A549 (cell line): ENCODE measurements at regions of chr10 and their contacts with region 1.

Region 1: DNA sequence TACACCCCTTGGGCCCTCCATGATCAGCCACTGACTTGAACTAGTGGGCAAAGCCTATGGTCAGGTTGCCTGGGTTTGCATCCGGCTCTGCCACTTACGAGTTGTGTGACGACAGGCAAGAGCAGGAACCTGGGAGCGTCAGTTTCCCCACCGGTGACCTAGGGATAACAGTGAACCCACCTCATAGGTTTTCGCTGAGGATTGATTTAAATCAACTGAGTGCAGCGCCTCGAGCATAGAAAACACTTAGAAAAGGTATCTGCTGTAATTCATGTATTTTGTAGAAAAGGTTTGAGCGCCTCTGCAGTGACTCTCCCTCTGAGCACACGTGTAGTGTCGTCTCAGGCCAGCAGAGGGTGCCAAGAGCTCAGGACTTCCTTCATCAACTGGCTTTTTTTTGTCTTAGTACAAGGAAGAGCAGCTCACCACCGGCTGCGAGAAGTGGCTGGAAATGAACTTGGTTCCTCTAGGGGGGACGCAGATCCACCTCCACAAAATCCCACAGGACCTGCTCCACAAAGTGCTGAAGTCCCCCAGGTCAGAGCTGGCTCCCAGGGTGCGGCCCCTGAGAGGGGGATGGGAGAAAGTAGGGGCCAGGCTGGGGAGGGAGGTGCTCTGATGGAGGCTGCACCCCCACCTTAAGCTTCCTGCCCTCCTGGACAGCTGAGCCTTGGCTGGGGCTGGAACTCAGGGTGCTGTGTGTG is 27.7 kb downstream of the BTBD16 start:
- DNase-seq: peak; percentile 80 to 89
- ATAC-seq: peak; percentile 82 to 93
- H3K4me3 ChIP-seq: peak overlapping the region; percentile 32; the same call in 2 of the 3 replicates
- H3K27ac ChIP-seq: peak overlapping the region; percentile 88 to 92
- H3K4me1 ChIP-seq: peaks cover 23% of the 10 kb centered on the region
- CTCF ChIP-seq: peak; percentile 96
- EP300 ChIP-seq: no peak
- POLR2A ChIP-seq: no peak
- RAD21 ChIP-seq: peak; percentile 99

Region 2: DNA sequence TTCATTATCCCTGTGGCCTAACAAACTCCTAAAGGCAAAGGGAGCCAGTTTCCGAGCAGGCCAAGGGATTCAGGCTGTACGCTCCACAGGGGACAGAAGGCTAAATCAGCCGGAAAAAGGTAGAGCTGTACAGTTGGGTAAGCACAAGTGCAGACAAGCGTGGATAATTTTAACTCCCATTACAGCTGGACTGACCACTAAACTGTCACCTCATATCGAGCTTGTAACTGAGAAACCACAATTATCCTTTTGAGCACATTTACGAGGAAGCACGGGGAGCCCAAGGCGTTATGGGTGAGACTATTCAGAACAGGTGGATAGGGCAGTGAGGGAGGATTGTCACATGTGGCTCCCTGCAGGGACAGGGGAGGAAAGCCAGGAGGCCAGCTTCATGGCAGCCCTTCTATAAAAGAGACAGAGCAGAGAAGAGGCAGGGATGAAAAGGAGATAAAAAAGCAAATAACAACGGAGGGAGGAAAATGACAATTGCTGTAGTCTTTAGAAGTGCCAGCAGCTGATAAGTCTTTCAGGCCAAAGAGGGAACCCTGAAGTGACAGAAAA is 988.5 kb before region 1 on chr10:
- CTCF ChIA-PET with region 1: no interaction called
- POLR2A ChIA-PET with region 1: no interaction called
- DNase-seq: no peak
- ATAC-seq: no peak
- H3K4me3 ChIP-seq: no peak overlapping the region
- H3K27ac ChIP-seq: no peak overlapping the region
- H3K4me1 ChIP-seq: no peaks in the 10 kb centered on the region
- CTCF ChIP-seq: no peak
- EP300 ChIP-seq: no peak
- POLR2A ChIP-seq: no peak
- RAD21 ChIP-seq: no peak

Region 3: GRCh38 chr10:122089311-122090017 is 209.3 kb before region 1 on chr10:
- CTCF ChIA-PET with region 1: no interaction called
- POLR2A ChIA-PET with region 1: no interaction called
- DNase-seq: peak in 1 of 2 experiments; percentile 34
- ATAC-seq: peak in 1 of 2 experiments; percentile 68; a peak in 3 of 6 replicates
- H3K4me3 ChIP-seq: no peak overlapping the region
- H3K27ac ChIP-seq: peak overlapping the region in 1 of 2 experiments; percentile 62; a peak in 3 of 6 replicates
- H3K4me1 ChIP-seq: 0 out of 3 replicates have a peak, but pooled peaks cover 3% of the 10 kb centered on the region
- CTCF ChIP-seq: no peak
- EP300 ChIP-seq: no peak
- POLR2A ChIP-seq: no peak
- RAD21 ChIP-seq: peak in 1 of 2 experiments; percentile 33; a peak in 2 of 5 replicates

Region 4: DNA sequence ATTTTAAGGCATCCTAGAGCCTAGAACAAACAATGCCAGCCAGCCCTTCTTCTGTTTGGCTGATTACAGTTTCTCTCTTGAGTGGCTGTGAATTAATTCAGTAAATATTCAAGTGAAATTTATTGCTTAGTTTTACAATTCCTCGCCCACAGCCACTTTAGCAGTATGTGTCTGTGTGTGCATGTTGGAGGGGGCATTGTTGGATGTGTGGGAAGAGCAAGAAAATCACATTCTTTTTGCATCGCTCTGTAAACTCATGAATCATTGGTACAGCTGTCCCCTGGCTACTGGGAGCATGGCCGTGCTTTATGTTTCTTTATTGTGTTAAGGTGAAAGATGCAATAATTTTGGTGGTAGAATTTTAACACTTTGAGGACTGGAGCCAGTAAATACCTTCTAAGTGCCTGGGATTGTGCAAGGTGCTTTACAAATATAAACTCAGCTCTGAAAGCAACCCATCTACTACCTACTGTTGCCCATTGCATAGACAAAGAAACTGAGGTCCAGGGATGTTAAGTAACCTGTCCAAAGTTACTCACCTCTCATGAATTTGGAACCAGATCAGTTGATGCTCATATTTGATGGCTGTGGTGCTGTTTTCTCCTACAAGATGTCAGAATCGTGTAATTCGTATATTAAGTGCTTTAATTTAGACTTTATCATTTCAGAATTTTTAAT is 117.6 kb before region 1 on chr10:
- CTCF ChIA-PET with region 1: no interaction called
- POLR2A ChIA-PET with region 1: no interaction called
- DNase-seq: peak in 1 of 2 experiments; percentile 42
- ATAC-seq: peak in 1 of 2 experiments; percentile 19; a peak in 2 of 6 replicates
- H3K4me3 ChIP-seq: no peak overlapping the region
- H3K27ac ChIP-seq: peak overlapping the region; percentile 59 to 82; a peak in 5 of 6 replicates
- H3K4me1 ChIP-seq: peaks cover 62% of the 10 kb centered on the region
- CTCF ChIP-seq: no peak
- EP300 ChIP-seq: no peak
- POLR2A ChIP-seq: no peak
- RAD21 ChIP-seq: no peak

Region 5: GRCh38 chr10:122257041-122257440 is 41.7 kb before region 1 on chr10:
- CTCF ChIA-PET with region 1: no interaction called
- POLR2A ChIA-PET with region 1: no interaction called
- DNase-seq: no peak
- ATAC-seq: no peak
- H3K4me3 ChIP-seq: no peak overlapping the region
- H3K27ac ChIP-seq: no peak overlapping the region
- H3K4me1 ChIP-seq: no peaks in the 10 kb centered on the region
- CTCF ChIP-seq: no peak
- EP300 ChIP-seq: no peak
- POLR2A ChIP-seq: no peak
- RAD21 ChIP-seq: no peak

Region 6: DNA sequence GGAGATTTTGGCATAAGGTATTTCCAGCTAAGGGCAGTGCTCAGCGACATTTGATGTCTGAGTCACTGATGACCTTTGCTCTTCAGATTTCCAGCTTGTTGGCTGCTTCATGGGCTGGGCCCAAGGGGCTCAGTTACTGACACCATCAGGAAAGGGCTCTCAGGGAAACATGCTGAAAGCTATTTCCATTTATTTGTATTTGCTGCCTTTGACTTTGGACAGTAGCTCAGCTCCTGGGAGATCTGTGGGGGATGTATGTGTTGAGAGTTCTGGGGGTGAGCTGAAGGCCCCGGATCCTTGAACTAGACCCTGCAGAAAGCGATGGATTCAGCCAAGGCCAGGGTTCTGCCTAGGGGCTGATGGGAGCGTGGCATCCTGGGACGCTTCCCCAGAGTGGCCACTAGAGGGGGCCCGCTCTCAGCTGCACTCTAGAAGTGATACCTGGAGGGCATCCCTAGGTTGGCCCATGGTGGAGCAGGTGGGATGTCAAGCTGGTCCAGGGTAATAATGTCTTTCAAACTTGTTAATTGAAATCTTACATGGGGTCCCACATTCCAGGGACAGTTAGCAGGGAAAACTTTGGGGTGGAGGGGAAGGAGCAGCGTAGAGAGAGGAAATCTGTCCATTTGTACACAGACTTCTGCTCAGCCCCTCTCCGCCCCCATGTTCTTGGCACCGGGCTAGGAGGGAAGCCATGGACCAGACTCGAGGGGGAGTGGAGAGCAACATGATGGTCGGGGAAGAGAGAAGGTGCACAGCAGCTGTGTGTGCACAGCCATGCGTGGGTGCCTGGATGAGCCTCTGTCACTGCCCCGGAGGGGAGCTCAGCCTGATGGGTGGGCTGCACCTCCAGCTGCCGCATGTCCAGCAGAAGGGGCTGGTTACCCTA is 30.7 kb before region 1 on chr10:
- CTCF ChIA-PET with region 1: interaction called, 10 read pairs
- POLR2A ChIA-PET with region 1: no interaction called
- DNase-seq: peak; percentile 61 to 76
- ATAC-seq: peak; percentile 82 to 93
- H3K4me3 ChIP-seq: no peak overlapping the region
- H3K27ac ChIP-seq: peak overlapping the region; percentile 65 to 67; a peak in 5 of 6 replicates
- H3K4me1 ChIP-seq: peaks cover 40% of the 10 kb centered on the region
- CTCF ChIP-seq: peak; percentile 78
- EP300 ChIP-seq: no peak
- POLR2A ChIP-seq: no peak
- RAD21 ChIP-seq: peak; percentile 53 to 64

Region 7: DNA sequence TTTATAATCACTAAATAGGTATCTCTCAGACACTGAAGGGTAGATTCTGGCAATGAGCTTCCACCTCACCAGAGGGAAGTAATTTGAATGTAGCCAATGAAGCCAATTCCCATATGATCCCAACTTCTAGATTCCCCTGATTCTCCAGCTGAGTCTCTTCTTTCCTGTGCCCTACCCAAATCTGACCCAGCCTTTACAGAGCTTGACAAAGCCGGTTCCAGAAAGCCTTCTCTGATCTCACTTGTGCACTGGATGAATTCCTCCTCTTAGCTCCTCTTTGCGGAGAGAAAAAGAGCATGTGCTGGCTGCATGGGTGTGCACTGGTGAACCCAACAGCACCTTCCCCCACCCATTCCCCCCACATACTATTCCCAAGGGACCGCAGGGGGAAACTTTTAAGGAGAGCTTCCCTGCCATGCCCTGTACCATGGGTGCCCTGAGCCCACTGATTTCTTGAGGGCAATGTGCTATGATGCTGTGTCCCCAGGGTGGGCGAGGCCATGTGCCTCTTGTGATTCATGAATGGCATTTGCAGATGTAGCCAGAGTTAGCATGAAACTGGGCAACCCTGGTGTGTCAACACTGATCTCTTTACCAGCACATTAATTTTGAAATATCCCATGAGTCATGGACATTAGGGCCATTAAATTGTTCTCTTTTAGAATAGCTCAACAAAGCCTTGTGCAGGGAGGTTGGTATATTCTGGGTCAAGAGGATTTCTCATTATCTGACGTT is 25.4 kb after region 1 on chr10:
- CTCF ChIA-PET with region 1: interaction called, 22 read pairs
- POLR2A ChIA-PET with region 1: no interaction called
- DNase-seq: peak in 1 of 2 experiments; percentile 54
- ATAC-seq: peak; percentile 82 to 84; a peak in 5 of 6 replicates
- H3K4me3 ChIP-seq: no peak overlapping the region
- H3K27ac ChIP-seq: peak overlapping the region; percentile 52 to 54; a peak in 5 of 6 replicates
- H3K4me1 ChIP-seq: peaks cover 15% of the 10 kb centered on the region
- CTCF ChIP-seq: no peak
- EP300 ChIP-seq: no peak
- POLR2A ChIP-seq: no peak
- RAD21 ChIP-seq: no peak

Region 8: GRCh38 chr10:122342293-122343134 is 43.8 kb after region 1 on chr10:
- CTCF ChIA-PET with region 1: interaction called, 17 read pairs
- POLR2A ChIA-PET with region 1: no interaction called
- DNase-seq: peak; percentile 44 to 71
- ATAC-seq: peak; percentile 81 to 83
- H3K4me3 ChIP-seq: no peak overlapping the region
- H3K27ac ChIP-seq: peak overlapping the region; percentile 32 to 42; a peak in 3 of 6 replicates
- H3K4me1 ChIP-seq: peaks cover 16% of the 10 kb centered on the region
- CTCF ChIP-seq: peak; percentile 72
- EP300 ChIP-seq: no peak
- POLR2A ChIP-seq: no peak
- RAD21 ChIP-seq: peak; percentile 75 to 78

Region 9: GRCh38 chr10:122419876-122420623 is 121.3 kb after region 1 on chr10:
- CTCF ChIA-PET with region 1: interaction called, 15 read pairs
- POLR2A ChIA-PET with region 1: interaction called, 5 read pairs
- DNase-seq: no peak
- ATAC-seq: no peak
- H3K4me3 ChIP-seq: no peak overlapping the region
- H3K27ac ChIP-seq: no peak overlapping the region
- H3K4me1 ChIP-seq: no peaks in the 10 kb centered on the region
- CTCF ChIP-seq: no peak
- EP300 ChIP-seq: no peak
- POLR2A ChIP-seq: no peak
- RAD21 ChIP-seq: no peak

Region 10: DNA sequence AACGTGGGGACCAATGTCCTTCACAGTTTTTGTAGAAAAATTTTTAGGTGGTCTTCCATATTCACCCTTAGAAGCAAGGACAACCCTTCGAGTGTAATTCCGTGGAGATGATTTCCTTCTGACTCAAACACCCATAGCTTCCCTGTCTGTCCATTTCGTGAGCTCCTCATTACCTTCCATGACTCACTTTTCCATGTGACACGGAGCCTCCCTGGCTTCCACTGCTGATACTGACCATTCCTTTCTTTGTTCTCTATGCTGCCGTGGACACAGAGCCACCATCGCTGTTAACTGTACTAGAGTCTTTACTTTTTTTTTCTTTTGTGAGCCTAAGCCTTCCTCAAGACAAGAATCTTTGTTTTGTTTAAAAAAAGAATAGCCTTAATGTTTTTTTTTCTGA is 143.2 kb after region 1 on chr10:
- CTCF ChIA-PET with region 1: interaction called, 48 read pairs
- POLR2A ChIA-PET with region 1: no interaction called
- DNase-seq: peak; percentile 58 to 78
- ATAC-seq: peak; percentile 92 to 93
- H3K4me3 ChIP-seq: no peak overlapping the region
- H3K27ac ChIP-seq: peak overlapping the region; percentile 30 to 52; a peak in 3 of 6 replicates
- H3K4me1 ChIP-seq: peaks cover 16% of the 10 kb centered on the region; the same call in 2 of the 3 replicates
- CTCF ChIP-seq: no peak
- EP300 ChIP-seq: no peak
- POLR2A ChIP-seq: no peak
- RAD21 ChIP-seq: no peak

Region 11: GRCh38 chr10:122468926-122469781 is 170.4 kb after region 1 on chr10:
- CTCF ChIA-PET with region 1: interaction called, 11 read pairs
- POLR2A ChIA-PET with region 1: no interaction called
- DNase-seq: peak; percentile 88 to 89
- ATAC-seq: peak; percentile 95 to 98
- H3K4me3 ChIP-seq: no peak overlapping the region
- H3K27ac ChIP-seq: peak overlapping the region; percentile 68 to 86
- H3K4me1 ChIP-seq: peaks cover 24% of the 10 kb centered on the region
- CTCF ChIP-seq: peak; percentile 29; the same call in 2 of the 3 replicates
- EP300 ChIP-seq: peak; percentile 82 to 84; a peak in 3 of 5 replicates
- POLR2A ChIP-seq: no peak
- RAD21 ChIP-seq: peak; percentile 50 to 67